ENCODE measurements at regions of chrX and their contacts with region 1.

Region 1: DNA sequence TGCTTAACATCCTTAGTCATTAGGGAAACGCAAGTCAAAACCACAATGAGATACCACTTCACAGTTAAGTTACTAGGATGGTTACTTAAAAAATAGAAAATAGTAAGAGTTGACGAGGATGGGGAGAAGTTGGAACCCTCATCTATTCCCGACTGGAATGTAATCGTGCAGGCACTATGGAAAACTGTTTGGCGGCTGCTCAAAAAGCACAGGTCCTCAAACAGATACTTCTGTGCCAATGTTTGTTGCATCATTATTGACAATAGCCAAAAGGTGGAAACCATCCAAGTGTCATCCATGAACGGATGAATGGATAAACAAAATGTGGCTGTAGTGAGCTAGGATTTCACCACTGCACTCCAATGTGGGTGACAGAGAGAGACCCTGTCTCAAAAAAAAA is 11.7 kb downstream of the CTAG1B start:
- DNase-seq: no peak
- H3K4me3 ChIP-seq: no peak overlapping the region
- H3K27ac ChIP-seq: no peak overlapping the region
- H3K4me1 ChIP-seq: no peaks in the 10 kb centered on the region
- H3K27me3 ChIP-seq: no peaks in the 10 kb centered on the region
- CTCF ChIP-seq: no peak

Region 2: GRCh38 chrX:154727871-154728270 is 120.5 kb after region 1 on chrX:
- CTCF ChIA-PET with region 1: no interaction called
- POLR2A ChIA-PET with region 1: no interaction called
- intact Hi-C with region 1: loop called (anchors 10 kb)
- DNase-seq: no peak
- H3K4me3 ChIP-seq: no peak overlapping the region
- H3K27ac ChIP-seq: no peak overlapping the region
- H3K4me1 ChIP-seq: no peaks in the 10 kb centered on the region
- H3K27me3 ChIP-seq: no peaks in the 10 kb centered on the region
- CTCF ChIP-seq: no peak